GM13977 (cell line): ENCODE measurements at regions of chr2 and their contacts with region 1.

Region 1: DNA sequence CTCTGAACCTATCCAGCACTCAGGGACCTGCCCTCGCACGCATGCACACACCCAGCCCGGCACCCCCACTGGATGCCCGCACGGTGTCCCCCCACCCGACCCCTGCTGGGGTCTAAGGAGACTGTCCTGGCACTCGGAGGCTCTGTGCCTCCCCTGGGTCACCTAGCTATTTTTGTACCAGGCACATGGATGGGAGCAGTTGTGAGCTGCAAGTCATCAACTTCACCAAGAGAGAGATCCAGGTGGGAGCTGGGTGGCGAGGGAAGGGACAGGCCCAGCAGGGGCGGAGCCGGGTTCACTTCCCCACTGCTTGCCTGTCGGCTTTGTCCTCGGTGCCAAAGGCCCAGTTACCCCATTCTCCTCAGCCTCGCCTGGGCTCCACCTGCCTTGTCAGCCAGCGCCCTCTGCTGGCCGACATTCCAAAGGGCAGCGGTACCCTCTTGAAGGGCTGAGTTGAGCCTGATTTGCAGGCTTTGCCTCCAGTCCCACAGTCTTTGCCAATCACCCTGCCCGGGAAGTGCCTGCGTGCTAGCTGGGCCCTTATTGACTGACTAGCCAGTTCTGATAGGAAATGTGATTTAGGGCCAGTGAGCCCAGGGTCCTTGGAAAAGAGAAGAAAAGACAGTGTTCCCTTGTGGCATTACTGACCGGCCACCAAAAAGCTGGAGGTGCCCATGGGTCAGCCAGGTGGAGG is 5.8 kb downstream of the NT5DC4 start:
- DNase-seq: peak; percentile 91
- CTCF ChIP-seq: peak; percentile 99

Region 2: GRCh38 chr2:112626604-112627059 is 100.0 kb before region 1 on chr2:
- in situ Hi-C with region 1: loop called (anchors 10 kb)
- DNase-seq: peak; percentile 66
- CTCF ChIP-seq: peak; percentile 94

Region 3: DNA sequence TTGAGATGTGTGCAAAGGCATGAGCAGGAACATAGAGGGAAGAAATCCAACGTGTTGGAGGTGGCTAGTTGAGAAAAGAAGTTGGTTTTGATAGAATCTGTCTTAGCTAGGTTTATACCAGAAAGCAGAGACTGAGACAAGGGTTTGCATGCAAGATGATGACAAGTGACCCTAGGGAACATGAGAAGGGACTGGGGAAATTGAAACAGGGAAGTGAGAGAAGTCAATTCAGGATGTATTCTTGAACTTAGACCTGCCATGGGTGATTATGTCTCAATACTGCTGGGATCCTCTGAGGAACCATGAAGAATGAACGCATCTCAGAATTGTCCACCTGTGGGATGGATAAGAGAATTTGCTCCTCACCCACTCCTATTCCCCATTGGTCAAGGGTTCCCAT is 299.1 kb after region 1 on chr2:
- in situ Hi-C with region 1: no loop called
- DNase-seq: no peak
- CTCF ChIP-seq: no peak